ENCODE measurements at regions of chr1 and their contacts with region 1.

Region 1: GRCh38 chr1:150268705-150269403 is at the start of gene APH1A:
- DNase-seq: peak; percentile 69 to 92 (median 89)
- ATAC-seq: peak; percentile 97
- H3K4me3 ChIP-seq: peak within 1 kb of the TSS; percentile 87
- H3K4me3 Mint-ChIP-seq: peak within 1 kb of the TSS; percentile 94 to 99 (median 96)
- H3K27ac ChIP-seq: peak within 1 kb of the TSS; percentile 97
- H3K27ac Mint-ChIP-seq: peak within 1 kb of the TSS; percentile 88 to 99 (median 94)
- H3K4me1 ChIP-seq: peaks cover 13 to 20% of the 10 kb centered on the region in 2 donors
- H3K4me1 Mint-ChIP-seq: peaks cover 25 to 39% (median 30%) of the 10 kb centered on the region in 7 donors
- H3K27me3 ChIP-seq: no peaks in the 10 kb centered on the region
- H3K27me3 Mint-ChIP-seq: no peaks in the 10 kb centered on the region
- total RNA-seq, gene APH1A: 112 to 143 (median 127) TPM

Region 2: GRCh38 chr1:150281837-150282653 is 13.2 kb after region 1 on chr1 and contains the start of gene CIART:
- CTCF ChIA-PET with region 1: interaction called, 3 read pairs
- POLR2A ChIA-PET with region 1: interaction called, 19 read pairs
- intact Hi-C with region 1: loop called (anchors 1 kb)
- DNase-seq: peak; percentile 34 to 88 (median 82)
- ATAC-seq: peak; percentile 95
- H3K4me3 ChIP-seq: peak within 1 kb of the TSS; percentile 58
- H3K4me3 Mint-ChIP-seq: peak within 1 kb of the TSS; percentile 84 to 98 (median 94)
- H3K27ac ChIP-seq: peak within 1 kb of the TSS; percentile 52
- H3K27ac Mint-ChIP-seq: peak within 1 kb of the TSS; percentile 80 to 98 (median 91)
- H3K4me1 ChIP-seq: peaks cover 11 to 23% of the 10 kb centered on the region in 2 donors
- H3K4me1 Mint-ChIP-seq: peaks cover 20 to 36% (median 32%) of the 10 kb centered on the region in 7 donors
- H3K27me3 ChIP-seq: no peaks in the 10 kb centered on the region
- H3K27me3 Mint-ChIP-seq: peaks cover 0 to 13% (median 0%) of the 10 kb centered on the region in 5 donors
- total RNA-seq, gene CIART: 1.4 to 2.6 (median 2.4) TPM

Region 3: DNA sequence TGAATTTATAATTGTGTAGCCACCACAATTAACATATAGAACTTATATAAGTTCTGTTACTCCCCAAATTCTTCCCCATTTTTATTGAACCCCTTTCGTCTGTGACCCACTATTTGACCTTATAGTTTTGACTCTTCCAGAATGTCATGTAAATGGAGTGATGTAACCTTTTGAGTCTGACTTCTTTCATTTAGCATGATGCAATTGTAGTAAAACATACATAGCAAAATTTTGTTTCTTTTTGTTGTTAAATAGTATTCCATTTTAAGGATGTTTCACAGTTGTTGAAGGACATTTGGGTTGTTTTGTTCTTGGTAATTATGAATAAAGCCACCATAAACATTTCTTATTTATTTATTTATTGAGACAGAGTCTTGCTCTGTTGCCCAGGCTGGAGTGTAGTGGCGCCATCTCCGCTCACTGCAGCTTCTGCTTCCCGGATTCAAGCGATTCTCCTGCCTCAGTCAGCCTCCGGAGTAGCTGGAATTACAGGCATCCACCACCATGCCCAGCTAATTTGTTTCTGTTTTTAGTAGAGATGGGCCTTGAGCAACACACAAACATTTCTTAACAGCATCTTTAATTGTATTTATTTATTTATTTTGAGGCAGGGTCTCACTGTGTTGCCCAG is 128.7 kb after region 1 on chr1:
- CTCF ChIA-PET with region 1: no interaction called
- POLR2A ChIA-PET with region 1: no interaction called
- intact Hi-C with region 1: no loop called
- DNase-seq: no peak
- ATAC-seq: no peak
- H3K4me3 ChIP-seq: no peak overlapping the region
- H3K4me3 Mint-ChIP-seq: no peak overlapping the region
- H3K27ac ChIP-seq: no peak overlapping the region
- H3K27ac Mint-ChIP-seq: peak overlapping the region in 1 of 9 donors; percentile 44
- H3K4me1 ChIP-seq: no peaks in the 10 kb centered on the region
- H3K4me1 Mint-ChIP-seq: peaks cover 2 to 57% (median 46%) of the 10 kb centered on the region in 7 donors
- H3K27me3 ChIP-seq: no peaks in the 10 kb centered on the region
- H3K27me3 Mint-ChIP-seq: no peaks in the 10 kb centered on the region